Vagina (tissue), 2 donors: ENCODE measurements at regions of chr14 and their contacts with region 1.

Region 1: GRCh38 chr14:20343092-20343861 is at the start of gene PARP2:
- DNase-seq: peak; percentile 98 to 99
- H3K4me3 ChIP-seq: peak within 1 kb of the TSS; percentile 66 to 86
- H3K27ac ChIP-seq: peak within 1 kb of the TSS; percentile 96
- H3K4me1 ChIP-seq: peaks cover 6% of the 10 kb centered on the region
- H3K27me3 ChIP-seq: no peaks in the 10 kb centered on the region
- CTCF ChIP-seq: no peak
- POLR2A ChIP-seq: peak in 1 of 2 donors; percentile 90
- total RNA-seq, gene PARP2: 5.9 TPM

Region 2: DNA sequence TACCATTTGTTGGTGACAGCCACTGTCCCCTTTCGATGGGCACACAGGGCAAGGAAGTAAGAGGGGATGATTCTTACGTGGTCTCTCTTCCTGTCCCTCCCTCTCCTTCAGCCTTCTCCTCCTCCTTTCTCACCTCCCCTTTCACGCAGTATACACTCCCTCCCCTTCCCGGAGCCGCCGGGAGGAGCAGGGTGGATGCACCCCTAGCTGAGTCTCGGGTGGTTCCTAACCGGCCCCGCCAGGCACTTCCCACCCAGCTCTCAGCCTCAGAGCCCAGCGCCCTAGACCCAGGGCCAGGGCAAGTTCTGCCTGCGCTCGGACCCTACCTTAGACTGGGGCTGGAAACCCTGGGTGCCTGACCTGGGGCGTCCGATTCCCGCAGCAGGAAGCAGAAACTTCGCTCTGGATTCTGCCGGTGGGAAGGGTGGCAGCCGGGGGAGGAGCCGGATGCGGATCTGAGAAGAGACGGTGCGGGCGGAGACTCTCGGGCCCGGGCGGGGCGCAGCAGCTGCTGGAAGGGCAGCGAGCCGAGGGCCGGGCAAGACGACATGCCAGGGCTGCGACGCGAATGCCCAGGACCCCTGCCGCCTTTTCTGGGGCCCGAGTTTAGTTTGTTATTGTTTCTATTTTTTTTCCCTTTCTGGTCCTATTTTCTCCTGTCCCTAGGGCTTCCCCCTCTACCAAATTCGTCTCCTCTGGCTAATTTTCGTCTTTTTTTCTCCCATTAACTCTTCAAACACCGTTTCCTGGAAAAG is 69.9 kb after region 1 on chr14 and contains the start of gene TEP1:
- intact Hi-C with region 1: loop called (anchors 5 kb)
- DNase-seq: no peak
- H3K4me3 ChIP-seq: peak within 1 kb of the TSS; percentile 67 to 72
- H3K27ac ChIP-seq: peak within 1 kb of the TSS; percentile 90
- H3K4me1 ChIP-seq: peaks cover 26% of the 10 kb centered on the region
- H3K27me3 ChIP-seq: no peaks in the 10 kb centered on the region
- CTCF ChIP-seq: no peak
- POLR2A ChIP-seq: peak in 1 of 2 donors; percentile 27
- total RNA-seq, gene TEP1: 24.6 TPM

Region 3: DNA sequence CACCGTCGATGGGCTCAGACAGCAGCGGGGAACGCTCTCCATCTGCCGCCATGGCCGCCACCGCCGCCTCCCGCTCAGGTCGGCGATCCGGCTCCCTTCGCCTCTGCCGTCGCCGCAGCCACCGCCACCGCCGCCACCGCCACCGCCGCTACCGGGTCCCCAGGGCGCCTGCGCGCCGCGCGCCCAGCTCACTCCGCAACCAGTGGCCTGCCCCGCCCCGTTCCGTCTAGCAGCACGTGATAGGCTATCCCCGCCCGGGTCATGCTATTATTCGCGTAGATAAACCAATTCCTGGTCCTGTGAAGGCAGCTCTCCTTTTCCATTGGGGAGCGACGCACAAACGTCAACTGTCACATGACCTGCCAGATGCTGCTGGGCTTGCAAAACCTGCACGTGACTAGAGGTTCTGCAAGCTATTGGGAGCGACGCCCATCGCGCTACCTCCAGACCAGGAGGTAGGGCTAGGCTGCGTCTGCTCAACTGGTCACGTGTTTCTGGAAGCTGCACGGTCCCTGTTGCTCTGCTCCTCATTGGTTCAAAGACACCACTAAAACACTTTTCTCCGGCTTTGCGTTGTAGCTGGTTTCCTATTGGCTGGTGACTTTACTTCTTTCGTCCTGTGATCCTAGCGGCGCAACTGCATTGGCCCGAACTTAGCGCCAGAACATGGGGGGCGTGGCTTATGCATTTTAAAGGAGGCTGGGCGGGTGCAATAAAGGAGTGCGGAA is 118.2 kb after region 1 on chr14 and contains the start of gene PIP4P1:
- intact Hi-C with region 1: loop called (anchors 5 kb)
- DNase-seq: peak; percentile 100
- H3K4me3 ChIP-seq: peak within 1 kb of the TSS; percentile 88 to 98
- H3K27ac ChIP-seq: peak within 1 kb of the TSS; percentile 98
- H3K4me1 ChIP-seq: peaks cover 39% of the 10 kb centered on the region
- H3K27me3 ChIP-seq: no peaks in the 10 kb centered on the region
- CTCF ChIP-seq: peak in 1 of 3 experiments; percentile 16
- POLR2A ChIP-seq: peak in 1 of 2 donors; percentile 90
- total RNA-seq, gene PIP4P1: 24.1 TPM

Region 4: DNA sequence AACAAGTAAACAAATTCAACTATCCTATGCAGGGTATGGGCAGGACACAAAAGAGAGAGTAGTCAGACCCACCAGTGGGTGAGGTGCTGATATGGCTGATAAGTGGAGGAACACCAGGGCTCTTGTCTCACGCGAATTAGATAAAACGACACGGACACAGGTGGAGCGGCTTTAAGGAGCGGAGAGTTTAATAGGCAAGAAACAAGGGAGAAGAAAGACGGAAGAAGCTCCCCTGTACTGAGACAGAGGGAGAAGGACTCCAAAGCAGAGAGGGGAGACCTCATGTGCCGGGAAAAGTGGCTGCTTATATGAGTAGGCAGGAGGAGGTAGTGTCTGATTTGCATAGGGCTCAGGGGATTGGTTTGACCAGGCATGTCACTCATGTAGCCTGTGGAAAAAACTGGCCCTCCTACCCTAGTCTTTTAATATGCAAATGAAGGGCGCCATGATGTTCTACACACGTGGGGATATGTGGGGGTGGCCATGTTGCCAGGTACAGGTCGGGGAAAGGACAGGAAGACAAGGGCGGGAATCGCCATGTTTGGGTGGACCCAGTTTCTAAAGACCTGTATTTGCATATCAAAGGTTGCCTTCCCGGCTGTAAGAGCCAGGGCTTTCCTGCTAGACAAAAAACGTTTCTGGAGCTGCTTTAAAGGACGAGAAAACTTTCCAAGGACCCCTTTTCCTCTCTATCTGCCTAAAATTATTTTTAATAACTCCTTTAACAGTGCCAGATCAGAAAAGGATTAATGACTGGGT is 965.4 kb after region 1 on chr14:
- intact Hi-C with region 1: no loop called
- DNase-seq: peak; percentile 87 to 97
- H3K4me3 ChIP-seq: peak overlapping the region; percentile 6 to 29
- H3K27ac ChIP-seq: peak overlapping the region; percentile 17
- H3K4me1 ChIP-seq: peaks cover 6% of the 10 kb centered on the region
- H3K27me3 ChIP-seq: no peaks in the 10 kb centered on the region
- CTCF ChIP-seq: no peak
- POLR2A ChIP-seq: peak in 1 of 2 donors; percentile 19